Right ventricle myocardium inferior (tissue), 1 donor: ENCODE measurements at regions of chr16 and their contacts with region 1.

Region 1: DNA sequence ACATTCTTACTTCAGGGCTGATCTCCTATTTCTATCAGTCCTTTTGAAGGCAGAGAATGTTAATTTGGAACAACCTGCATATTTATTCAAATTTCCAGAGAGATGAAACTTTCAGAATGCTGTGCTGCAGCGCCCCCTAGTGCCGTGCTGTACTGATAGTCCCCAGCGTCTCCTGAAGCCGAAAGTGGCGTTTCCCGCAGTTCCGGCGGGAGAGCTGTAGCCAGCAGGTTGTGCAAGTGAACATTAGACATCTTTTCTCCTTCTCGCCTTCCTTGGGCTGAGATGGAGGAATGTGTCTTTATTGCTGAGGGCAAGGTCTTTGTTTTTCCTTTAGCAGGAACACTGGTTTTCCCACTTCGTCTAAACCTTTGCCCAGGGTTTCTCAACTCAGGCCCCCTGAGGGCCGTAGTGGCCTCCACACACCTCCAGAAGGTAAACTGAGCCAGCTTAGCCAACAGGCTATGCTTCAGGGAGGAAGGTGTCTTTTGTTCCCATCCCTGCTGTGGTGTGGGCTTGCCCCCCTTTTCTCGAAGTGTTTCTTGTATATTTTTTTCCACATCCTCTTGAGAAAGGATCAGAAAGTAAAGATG is 26.4 kb downstream of the USP10 start:
- DNase-seq: peak; percentile 95
- ATAC-seq: peak; percentile 85

Region 2: GRCh38 chr16:84504420-84505248 is 221.5 kb before region 1 on chr16 and contains the start of gene MEAK7:
- intact Hi-C with region 1: loop called (anchors 2 kb)
- DNase-seq: peak; percentile 99
- ATAC-seq: peak; percentile 98
- total RNA-seq, gene MEAK7: 7.4 TPM

Region 3: GRCh38 chr16:84672276-84673202 is 53.6 kb before region 1 on chr16:
- intact Hi-C with region 1: loop called (anchors 2 kb)
- DNase-seq: peak; percentile 90
- ATAC-seq: peak; percentile 80